ENCODE measurements at regions of chr4 and their contacts with region 1.

Region 1: DNA sequence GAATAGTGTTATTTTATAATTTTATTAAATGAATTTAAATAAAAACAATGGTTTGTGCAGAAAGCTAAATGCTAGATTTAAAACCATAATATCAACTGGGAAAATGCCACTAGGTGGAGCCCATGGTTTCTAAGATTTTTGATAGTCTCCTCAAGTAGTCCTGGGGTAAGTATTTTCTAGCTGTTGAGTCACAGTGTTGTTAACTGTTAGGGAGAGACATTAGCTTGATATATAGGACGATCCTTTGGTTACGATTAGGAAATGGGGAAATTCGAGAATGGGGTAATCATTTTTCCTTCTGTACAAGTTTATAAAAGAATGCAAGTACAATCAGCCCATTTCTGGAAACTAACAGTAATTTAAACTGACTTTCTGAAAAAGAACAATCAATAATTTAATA is 378.4 kb downstream of the ANKRD50 start:
- ATAC-seq: peak; percentile 53 to 91 (median 70)
- H3K4me3 ChIP-seq: no peak overlapping the region
- H3K27ac ChIP-seq: no peak overlapping the region
- H3K4me1 ChIP-seq: no peaks in the 10 kb centered on the region

Region 2: DNA sequence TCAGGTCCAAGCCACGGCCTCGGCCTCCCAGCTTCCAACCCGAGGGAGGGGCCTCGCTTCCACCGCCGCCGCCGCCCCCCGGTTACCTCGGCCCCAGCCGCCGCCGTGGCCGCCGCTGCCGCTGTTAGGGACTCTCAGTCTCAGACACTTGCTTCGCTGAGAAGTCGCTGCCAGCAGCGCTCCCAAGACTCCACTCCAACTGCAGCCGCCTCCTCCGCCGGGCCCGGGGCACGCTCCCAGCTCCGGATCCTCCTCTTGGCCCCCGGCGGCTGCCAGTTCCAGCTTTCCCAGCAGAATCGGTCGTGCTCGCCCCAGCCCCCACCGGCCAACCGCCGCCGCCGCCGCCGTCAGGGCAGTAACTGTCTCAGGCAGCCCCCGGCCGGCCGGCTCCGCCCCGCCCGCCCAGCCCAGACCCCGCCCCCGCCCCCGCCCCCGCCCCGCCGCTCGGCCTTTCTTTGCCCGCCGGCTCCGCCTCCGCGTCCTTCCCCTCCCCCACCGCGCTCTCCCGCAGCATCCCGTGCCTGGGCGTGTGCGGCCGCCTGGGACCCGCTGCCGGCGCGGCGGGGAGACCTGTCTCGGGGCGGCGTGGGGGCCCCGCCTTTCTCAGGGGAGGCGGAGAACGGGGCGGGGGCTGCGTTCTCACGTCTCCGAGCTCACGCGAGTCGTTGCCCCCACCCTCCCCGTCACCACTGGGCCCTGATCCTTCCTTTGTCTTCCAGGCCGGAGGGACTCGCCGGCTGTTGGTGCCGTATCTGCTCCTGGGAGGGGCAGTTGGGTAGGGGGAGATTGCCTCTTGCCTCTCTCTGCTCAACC is 378.5 kb after region 1 on chr4 and contains the start of gene ANKRD50:
- in situ Hi-C with region 1: loop called in 2 of 9 experiments (anchors 25 kb)
- ATAC-seq: peak; percentile 62 to 85 (median 77)
- H3K4me3 ChIP-seq: peak within 1 kb of the TSS; percentile 65 to 76 (median 72)
- H3K27ac ChIP-seq: peak within 1 kb of the TSS; percentile 96 to 99
- H3K4me1 ChIP-seq: peaks cover 6 to 15% of the 10 kb centered on the region in 2 donors
- total RNA-seq, gene ANKRD50: 12.3 to 54.3 (median 23.6) TPM

Region 3: GRCh38 chr4:125244848-125245450 is 910.8 kb after region 1 on chr4:
- in situ Hi-C with region 1: loop called in 4 of 9 experiments (anchors 25 kb)
- ATAC-seq: peak in 2 of 8 experiments; percentile 21 to 51
- H3K4me3 ChIP-seq: no peak overlapping the region
- H3K27ac ChIP-seq: no peak overlapping the region
- H3K4me1 ChIP-seq: no peaks in the 10 kb centered on the region

Region 4: DNA sequence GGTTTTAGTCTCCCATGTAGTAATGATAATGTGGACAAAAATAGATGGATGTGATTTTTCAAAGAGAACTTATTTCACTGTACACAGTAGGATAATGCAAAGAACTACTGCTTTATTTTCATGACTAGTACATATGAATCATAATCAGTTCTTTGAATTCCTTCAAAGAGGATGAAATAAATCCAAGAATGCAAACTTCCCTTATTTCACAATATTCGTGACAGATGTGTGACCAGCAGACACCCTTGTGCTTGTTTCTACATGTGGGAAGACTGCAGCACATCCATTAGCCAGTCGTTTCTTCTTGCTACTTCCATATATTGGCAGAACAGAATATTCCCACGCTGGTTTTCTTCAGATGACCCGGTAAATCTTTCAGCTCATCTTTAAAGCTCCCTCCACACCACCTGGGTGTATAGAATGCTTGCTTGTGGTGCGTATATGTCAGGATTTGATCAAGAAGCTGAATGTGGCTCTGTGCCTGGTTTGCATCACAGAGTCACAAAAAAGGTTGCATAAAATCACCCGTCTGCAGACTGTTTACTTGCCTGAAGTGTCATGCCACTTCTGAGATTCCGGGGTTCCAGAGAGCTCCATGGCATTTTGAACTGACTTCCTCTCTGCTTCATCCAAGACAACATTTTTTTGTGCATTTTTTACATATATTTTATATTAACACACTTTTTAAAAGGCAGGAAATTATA is 932.9 kb after region 1 on chr4:
- in situ Hi-C with region 1: loop called in 1 of 9 experiments (anchors 25 kb)
- ATAC-seq: peak in 6 of 8 experiments; percentile 33 to 89 (median 66)
- H3K4me3 ChIP-seq: no peak overlapping the region
- H3K27ac ChIP-seq: no peak overlapping the region
- H3K4me1 ChIP-seq: peaks cover 6 to 12% of the 10 kb centered on the region in 2 donors

Region 5: GRCh38 chr4:125283707-125284279 is 949.7 kb after region 1 on chr4:
- in situ Hi-C with region 1: loop called in 2 of 9 experiments (anchors 25 kb)
- ATAC-seq: peak in 2 of 8 experiments; percentile 29 to 47
- H3K4me3 ChIP-seq: no peak overlapping the region
- H3K27ac ChIP-seq: no peak overlapping the region
- H3K4me1 ChIP-seq: no peaks in the 10 kb centered on the region